CD8-positive, alpha-beta T cell (primary cell): ENCODE measurements at regions of chr2 and their contacts with region 1.

Region 1: GRCh38 chr2:156400706-156401678 is 35.2 kb upstream of the GPD2 start:
- DNase-seq: peak; percentile 62 to 92 (median 81)
- ATAC-seq: peak; percentile 79
- H3K4me3 ChIP-seq: peak overlapping the region; percentile 74 to 85
- H3K4me3 Mint-ChIP-seq: peak overlapping the region; percentile 88
- H3K27ac ChIP-seq: peak overlapping the region; percentile 80 to 93
- H3K27ac Mint-ChIP-seq: peak overlapping the region; percentile 95
- H3K4me1 ChIP-seq: peaks cover 4% of the 10 kb centered on the region
- H3K4me1 Mint-ChIP-seq: peaks cover 28% of the 10 kb centered on the region
- H3K27me3 ChIP-seq: no peaks in the 10 kb centered on the region
- H3K27me3 Mint-ChIP-seq: no peaks in the 10 kb centered on the region
- CTCF ChIP-seq: no peak

Region 2: DNA sequence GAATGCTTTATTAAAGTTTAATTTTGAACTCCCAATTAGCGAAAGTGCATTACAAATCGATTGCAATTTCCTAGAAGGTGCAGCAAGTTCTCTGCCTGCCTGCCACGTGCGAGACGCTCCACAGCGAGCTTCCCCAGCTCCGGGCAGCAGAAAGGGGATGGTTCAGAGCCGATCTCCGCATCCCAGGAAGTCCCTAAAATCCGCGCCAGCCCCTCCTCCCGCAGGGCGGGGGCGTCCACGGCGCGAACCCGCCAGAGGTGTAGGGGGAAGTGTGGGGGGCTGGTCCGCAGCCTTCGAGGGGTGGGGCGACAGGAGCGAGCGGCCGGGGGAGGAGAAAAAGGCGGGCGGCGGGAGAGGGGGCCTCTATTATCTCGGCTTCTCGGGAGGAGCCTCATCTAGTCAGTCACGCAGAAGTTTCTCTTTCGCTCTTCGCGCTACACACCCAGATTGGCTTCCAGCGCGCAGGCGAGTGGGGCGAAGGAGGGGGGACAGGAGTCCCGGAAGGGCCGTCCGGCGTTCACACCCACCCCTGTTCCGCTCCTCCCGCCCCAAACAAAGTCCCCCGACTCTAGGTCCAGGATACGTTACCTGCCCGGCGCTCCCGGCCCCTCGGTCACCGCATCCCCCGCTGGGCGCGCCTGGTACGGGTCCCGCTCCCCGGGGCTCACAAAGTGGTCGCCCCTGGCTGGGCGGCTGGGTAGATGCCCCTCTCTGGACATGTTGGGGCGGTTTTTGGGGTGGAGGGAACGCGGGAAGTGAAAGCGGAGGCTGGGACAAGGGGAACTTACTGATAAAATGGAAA is 59.3 kb before region 1 on chr2:
- CTCF ChIA-PET with region 1: interaction called, 3 read pairs
- POLR2A ChIA-PET with region 1: interaction called, 38 read pairs
- intact Hi-C with region 1: loop called (anchors 1 to 2 kb)
- DNase-seq: peak; percentile 73 to 96 (median 87)
- ATAC-seq: peak; percentile 75
- H3K4me3 ChIP-seq: peak overlapping the region; percentile 57 to 91
- H3K4me3 Mint-ChIP-seq: peak overlapping the region; percentile 90
- H3K27ac ChIP-seq: peak overlapping the region; percentile 99
- H3K27ac Mint-ChIP-seq: peak overlapping the region; percentile 98
- H3K4me1 ChIP-seq: peaks cover 19% of the 10 kb centered on the region
- H3K4me1 Mint-ChIP-seq: peaks cover 39% of the 10 kb centered on the region
- H3K27me3 ChIP-seq: no peaks in the 10 kb centered on the region
- H3K27me3 Mint-ChIP-seq: no peaks in the 10 kb centered on the region
- CTCF ChIP-seq: no peak

Region 3: GRCh38 chr2:156483741-156484176 is 82.8 kb after region 1 on chr2:
- CTCF ChIA-PET with region 1: no interaction called
- POLR2A ChIA-PET with region 1: no interaction called
- intact Hi-C with region 1: loop called in 1 of 2 experiments (anchors 5 kb)
- DNase-seq: no peak
- ATAC-seq: no peak
- H3K4me3 ChIP-seq: no peak overlapping the region
- H3K4me3 Mint-ChIP-seq: no peak overlapping the region
- H3K27ac ChIP-seq: no peak overlapping the region
- H3K27ac Mint-ChIP-seq: no peak overlapping the region
- H3K4me1 ChIP-seq: no peaks in the 10 kb centered on the region
- H3K4me1 Mint-ChIP-seq: peaks cover 23% of the 10 kb centered on the region
- H3K27me3 ChIP-seq: no peaks in the 10 kb centered on the region
- H3K27me3 Mint-ChIP-seq: no peaks in the 10 kb centered on the region
- CTCF ChIP-seq: no peak